OCI-LY7 (cell line): ENCODE measurements at regions of chr11 and their contacts with region 1.

Region 1: DNA sequence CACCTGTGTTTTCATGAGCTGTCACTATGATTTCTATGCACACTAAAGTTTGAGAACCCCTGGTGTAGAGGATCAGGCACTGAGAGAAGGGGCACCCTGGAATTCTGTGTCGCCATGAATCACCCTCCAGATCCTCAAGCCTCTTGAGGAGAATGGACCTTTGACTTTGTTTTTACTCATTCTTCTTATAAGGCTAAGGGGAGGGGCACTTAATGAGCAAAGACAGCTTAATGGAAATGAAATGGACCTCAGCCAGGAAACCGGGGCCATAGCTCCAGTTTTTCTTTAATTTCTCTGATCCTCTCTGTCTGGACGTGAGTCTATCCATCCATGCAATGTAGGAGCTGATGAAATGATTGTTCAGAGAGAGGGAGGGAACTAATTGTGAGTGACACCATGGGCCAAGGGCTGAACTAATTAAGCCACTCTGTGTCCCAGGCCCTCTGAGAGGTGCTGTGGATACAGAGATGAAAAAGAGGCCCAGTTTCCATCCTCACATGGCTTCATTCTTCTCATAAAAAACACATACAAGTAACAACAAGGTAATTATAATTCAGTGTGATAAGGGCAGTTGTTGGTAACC is 32.9 kb downstream of the OR2AT4 start:
- DNase-seq: no peak
- H3K4me3 ChIP-seq: no peak overlapping the region
- H3K27ac ChIP-seq: no peak overlapping the region
- H3K4me1 ChIP-seq: no peaks in the 10 kb centered on the region
- CTCF ChIP-seq: no peak

Region 2: DNA sequence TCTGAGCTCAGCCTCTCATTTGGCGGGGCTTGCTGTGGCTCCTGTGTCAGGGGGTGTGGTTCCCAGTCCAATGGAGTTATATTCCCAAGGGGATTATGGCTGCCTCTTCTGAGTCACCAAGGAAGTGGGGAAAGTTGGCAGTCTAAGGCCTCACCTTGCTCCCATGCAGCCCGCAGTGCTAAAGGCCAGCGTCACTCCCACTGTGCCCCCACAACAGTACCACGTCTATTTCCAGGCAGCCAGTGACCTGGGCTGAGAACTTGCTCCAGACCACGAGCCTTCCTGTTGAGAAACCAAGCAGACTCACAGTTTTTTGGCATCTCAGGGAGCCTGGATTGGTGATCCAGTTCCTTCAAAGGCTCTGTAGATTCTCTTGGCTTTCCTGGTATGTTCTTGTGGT is 12.8 kb before region 1 on chr11:
- CTCF ChIA-PET with region 1: no interaction called
- POLR2A ChIA-PET with region 1: interaction called, 16 read pairs
- intact Hi-C with region 1: no loop called
- DNase-seq: peak; percentile 16
- H3K4me3 ChIP-seq: no peak overlapping the region
- H3K27ac ChIP-seq: peak overlapping the region; percentile 97
- H3K4me1 ChIP-seq: peaks cover 46% of the 10 kb centered on the region
- CTCF ChIP-seq: no peak